ENCODE measurements at regions of chr2 and their contacts with region 1.

Region 1: DNA sequence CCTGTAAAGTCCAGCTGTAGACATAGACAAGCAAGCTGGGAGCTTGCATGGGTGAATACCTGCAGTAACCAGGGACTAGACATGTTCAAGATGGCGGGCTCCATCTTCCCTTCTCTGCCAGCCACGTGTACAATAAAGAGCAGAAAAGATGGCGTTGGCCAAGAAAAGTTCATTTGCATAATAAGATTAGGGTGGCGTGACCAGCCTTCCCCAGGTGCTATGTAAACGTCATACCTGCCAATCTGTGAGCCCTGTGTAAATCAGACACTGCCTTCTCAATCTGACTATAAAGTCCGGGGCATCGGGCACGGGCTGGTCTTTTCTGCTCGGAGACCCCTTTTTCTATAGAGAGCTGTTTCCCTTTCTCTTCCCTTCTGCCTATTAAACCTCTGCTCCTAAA is 101.6 kb upstream of the XPO1 start:
- DNase-seq: no peak
- ATAC-seq: no peak
- H3K4me3 ChIP-seq: no peak overlapping the region
- H3K4me3 Mint-ChIP-seq: no peak overlapping the region
- H3K27ac ChIP-seq: no peak overlapping the region
- H3K27ac Mint-ChIP-seq: no peak overlapping the region
- H3K4me1 ChIP-seq: no peaks in the 10 kb centered on the region
- H3K4me1 Mint-ChIP-seq: no peaks in the 10 kb centered on the region
- H3K27me3 ChIP-seq: no peaks in the 10 kb centered on the region
- H3K27me3 Mint-ChIP-seq: no peaks in the 10 kb centered on the region
- CTCF ChIP-seq: no peak

Region 2: GRCh38 chr2:61512768-61513398 is 126.8 kb before region 1 on chr2:
- CTCF ChIA-PET with region 1: no interaction called
- POLR2A ChIA-PET with region 1: interaction called, 3 read pairs
- intact Hi-C with region 1: loop called in 1 of 2 experiments (anchors 5 kb)
- DNase-seq: no peak
- ATAC-seq: no peak
- H3K4me3 ChIP-seq: no peak overlapping the region
- H3K4me3 Mint-ChIP-seq: no peak overlapping the region
- H3K27ac ChIP-seq: no peak overlapping the region
- H3K27ac Mint-ChIP-seq: peak overlapping the region; percentile 64
- H3K4me1 ChIP-seq: no peaks in the 10 kb centered on the region
- H3K4me1 Mint-ChIP-seq: peaks cover 30% of the 10 kb centered on the region
- H3K27me3 ChIP-seq: no peaks in the 10 kb centered on the region
- H3K27me3 Mint-ChIP-seq: no peaks in the 10 kb centered on the region
- CTCF ChIP-seq: no peak

Measured in CD8-positive, alpha-beta T cell (primary cell).